ENCODE measurements at regions of chr13 and their contacts with region 1.

Region 1: DNA sequence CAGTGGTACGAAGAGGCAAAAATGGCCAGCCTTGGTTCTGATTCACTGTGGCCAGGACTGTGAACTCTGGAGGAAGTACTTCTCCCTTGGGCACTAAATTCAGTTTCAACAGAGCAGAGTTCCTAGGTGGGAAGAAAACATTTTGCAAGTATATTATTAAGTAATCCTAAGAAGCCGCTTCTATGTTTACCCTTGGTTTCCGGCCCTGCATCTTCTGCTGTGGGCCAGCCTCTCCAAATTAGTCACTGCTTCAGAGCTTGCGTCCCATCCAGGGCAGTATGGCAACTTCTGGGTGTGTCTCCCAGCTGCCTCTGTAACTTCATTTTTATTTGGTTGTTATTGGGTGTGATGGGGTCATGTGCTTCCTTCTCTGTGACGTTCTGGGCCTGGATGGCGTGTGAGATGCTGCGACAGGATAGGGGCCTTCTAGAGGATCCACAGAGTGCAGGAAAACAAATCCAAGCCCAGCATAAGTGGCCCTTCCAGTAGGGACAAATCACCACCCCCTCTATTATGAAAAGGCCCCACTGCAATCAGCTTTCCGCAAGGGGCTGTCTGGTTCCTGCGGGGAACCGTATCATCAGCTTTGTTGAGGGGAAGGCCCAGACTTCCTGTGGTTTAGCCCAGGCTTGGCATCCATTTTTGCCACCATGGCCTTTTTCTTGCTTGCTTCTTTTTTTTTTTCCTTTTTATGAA is 55.1 kb upstream of the C1QTNF9 start:
- DNase-seq: peak; percentile 47
- H3K4me3 Mint-ChIP-seq: peak overlapping the region; percentile 86
- H3K27ac Mint-ChIP-seq: peak overlapping the region; percentile 91
- H3K4me1 Mint-ChIP-seq: peaks cover 84% of the 10 kb centered on the region
- H3K27me3 Mint-ChIP-seq: no peaks in the 10 kb centered on the region

Region 2: DNA sequence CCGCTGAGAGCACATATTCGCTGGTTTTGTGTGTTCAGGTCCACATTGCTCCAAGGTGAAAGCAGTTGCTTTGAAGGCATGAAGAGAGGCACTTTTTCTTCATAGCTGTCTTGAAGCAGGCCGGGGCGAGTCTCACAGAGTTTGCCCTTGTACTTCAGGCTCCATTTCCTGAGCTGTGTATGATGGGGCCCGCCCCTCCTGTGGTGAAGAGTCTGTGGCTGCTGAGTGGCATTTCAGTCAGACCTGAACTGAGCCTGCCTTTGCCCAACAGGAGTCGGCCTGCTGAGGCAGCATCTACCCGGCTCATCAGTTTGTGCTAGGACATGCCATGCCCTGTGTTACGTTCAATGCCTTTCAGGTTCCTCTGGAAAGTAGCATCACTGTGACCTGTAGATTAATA is 10.7 kb after region 1 on chr13:
- intact Hi-C with region 1: loop called (anchors 1 kb)
- DNase-seq: peak; percentile 76
- H3K4me3 Mint-ChIP-seq: peak overlapping the region; percentile 45
- H3K27ac Mint-ChIP-seq: peak overlapping the region; percentile 78
- H3K4me1 Mint-ChIP-seq: peaks cover 83% of the 10 kb centered on the region
- H3K27me3 Mint-ChIP-seq: no peaks in the 10 kb centered on the region

Region 3: DNA sequence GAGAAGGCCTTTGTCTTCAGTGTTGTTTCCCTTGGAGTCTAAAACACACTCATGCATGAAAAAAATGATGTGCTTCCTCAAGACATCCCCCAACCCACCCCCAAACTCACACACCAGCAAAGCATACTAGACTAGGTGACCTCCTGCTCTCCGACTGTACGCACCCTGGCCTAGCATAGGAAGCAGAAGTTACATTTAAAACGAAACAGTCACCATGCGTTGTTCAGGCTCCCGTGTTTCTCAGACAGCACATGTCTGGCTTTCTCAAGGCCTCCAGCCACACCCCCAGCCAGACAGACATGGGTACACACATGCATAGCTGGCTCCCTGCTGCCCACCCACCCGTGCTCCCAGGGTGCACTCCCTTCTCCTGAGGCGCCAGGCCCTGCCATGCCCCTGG is 26.4 kb after region 1 on chr13:
- intact Hi-C with region 1: no loop called
- DNase-seq: no peak
- H3K4me3 Mint-ChIP-seq: no peak overlapping the region
- H3K27ac Mint-ChIP-seq: no peak overlapping the region
- H3K4me1 Mint-ChIP-seq: peaks cover 48% of the 10 kb centered on the region
- H3K27me3 Mint-ChIP-seq: no peaks in the 10 kb centered on the region

Region 4: DNA sequence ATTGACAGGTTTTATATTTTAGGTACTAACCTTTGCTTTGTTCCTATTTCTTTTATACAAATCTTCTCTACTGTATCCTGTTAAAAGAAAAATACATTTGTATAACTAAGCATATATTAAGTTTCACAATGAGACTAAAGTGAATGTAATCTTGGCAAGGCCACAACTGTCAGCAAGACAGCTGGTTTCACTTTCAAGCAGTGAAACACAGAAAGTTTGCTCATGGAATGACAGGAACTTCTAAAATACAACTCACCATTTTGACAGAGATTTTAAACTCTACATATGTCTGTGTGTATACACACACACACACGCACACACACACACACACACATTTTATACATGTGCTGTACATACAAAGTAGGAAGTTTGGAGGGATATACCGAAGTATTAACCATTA is 204.9 kb after region 1 on chr13:
- intact Hi-C with region 1: loop called (anchors 5 kb)
- DNase-seq: no peak
- H3K4me3 Mint-ChIP-seq: no peak overlapping the region
- H3K27ac Mint-ChIP-seq: peak overlapping the region; percentile 50
- H3K4me1 Mint-ChIP-seq: peaks cover 37% of the 10 kb centered on the region
- H3K27me3 Mint-ChIP-seq: no peaks in the 10 kb centered on the region

Measured in activated T-helper 1 cell treated with anti-CD3 and anti-CD28 coated beads, Interleukin-12 subunit alpha, Interleukin-12 subunit beta, Interleukin-2, Interleukin-4 antibody, amounts not matched to agents 30 ng/mL and 10 ng/mL and 1 ng/mL, durations not matched to agents 14 hours and 24 hours and 36 hours (primary cell).